ENCODE measurements at regions of chr9 and their contacts with region 1.

Region 1: GRCh38 chr9:71604197-71605063 is 163.9 kb downstream of the CEMIP2 start:
- DNase-seq: peak; percentile 65
- H3K4me3 ChIP-seq: no peak overlapping the region
- H3K27ac ChIP-seq: no peak overlapping the region
- H3K4me1 ChIP-seq: no peaks in the 10 kb centered on the region
- H3K27me3 ChIP-seq: no peaks in the 10 kb centered on the region
- CTCF ChIP-seq: peak; percentile 74 to 80
- POLR2A ChIP-seq: no peak

Region 2: GRCh38 chr9:71210326-71210725 is 394.1 kb before region 1 on chr9:
- CTCF ChIA-PET with region 1: no interaction called
- POLR2A ChIA-PET with region 1: no interaction called
- dilution Hi-C with region 1: no loop called
- intact Hi-C with region 1: no loop called
- DNase-seq: no peak
- H3K4me3 ChIP-seq: no peak overlapping the region
- H3K27ac ChIP-seq: no peak overlapping the region
- H3K4me1 ChIP-seq: no peaks in the 10 kb centered on the region
- H3K27me3 ChIP-seq: no peaks in the 10 kb centered on the region
- CTCF ChIP-seq: no peak
- POLR2A ChIP-seq: no peak

Region 3: GRCh38 chr9:71285191-71285656 is 319.2 kb before region 1 on chr9:
- CTCF ChIA-PET with region 1: no interaction called
- POLR2A ChIA-PET with region 1: no interaction called
- dilution Hi-C with region 1: no loop called
- intact Hi-C with region 1: loop called (anchors 5 kb)
- DNase-seq: peak; percentile 73
- H3K4me3 ChIP-seq: no peak overlapping the region
- H3K27ac ChIP-seq: no peak overlapping the region
- H3K4me1 ChIP-seq: no peaks in the 10 kb centered on the region
- H3K27me3 ChIP-seq: no peaks in the 10 kb centered on the region
- CTCF ChIP-seq: peak; percentile 70 to 73
- POLR2A ChIP-seq: no peak

Region 4: GRCh38 chr9:71614409-71615010 is 10.1 kb after region 1 on chr9:
- CTCF ChIA-PET with region 1: interaction called, 12 read pairs
- POLR2A ChIA-PET with region 1: no interaction called
- dilution Hi-C with region 1: no loop called
- intact Hi-C with region 1: no loop called
- DNase-seq: no peak
- H3K4me3 ChIP-seq: no peak overlapping the region
- H3K27ac ChIP-seq: no peak overlapping the region
- H3K4me1 ChIP-seq: no peaks in the 10 kb centered on the region
- H3K27me3 ChIP-seq: no peaks in the 10 kb centered on the region
- CTCF ChIP-seq: no peak
- POLR2A ChIP-seq: no peak

Region 5: GRCh38 chr9:71628247-71628646 is 23.8 kb after region 1 on chr9:
- CTCF ChIA-PET with region 1: interaction called, 11 read pairs
- POLR2A ChIA-PET with region 1: no interaction called
- dilution Hi-C with region 1: no loop called
- intact Hi-C with region 1: no loop called
- DNase-seq: no peak
- H3K4me3 ChIP-seq: no peak overlapping the region
- H3K27ac ChIP-seq: no peak overlapping the region
- H3K4me1 ChIP-seq: peaks cover 20% of the 10 kb centered on the region
- H3K27me3 ChIP-seq: no peaks in the 10 kb centered on the region
- CTCF ChIP-seq: no peak
- POLR2A ChIP-seq: no peak

Region 6: DNA sequence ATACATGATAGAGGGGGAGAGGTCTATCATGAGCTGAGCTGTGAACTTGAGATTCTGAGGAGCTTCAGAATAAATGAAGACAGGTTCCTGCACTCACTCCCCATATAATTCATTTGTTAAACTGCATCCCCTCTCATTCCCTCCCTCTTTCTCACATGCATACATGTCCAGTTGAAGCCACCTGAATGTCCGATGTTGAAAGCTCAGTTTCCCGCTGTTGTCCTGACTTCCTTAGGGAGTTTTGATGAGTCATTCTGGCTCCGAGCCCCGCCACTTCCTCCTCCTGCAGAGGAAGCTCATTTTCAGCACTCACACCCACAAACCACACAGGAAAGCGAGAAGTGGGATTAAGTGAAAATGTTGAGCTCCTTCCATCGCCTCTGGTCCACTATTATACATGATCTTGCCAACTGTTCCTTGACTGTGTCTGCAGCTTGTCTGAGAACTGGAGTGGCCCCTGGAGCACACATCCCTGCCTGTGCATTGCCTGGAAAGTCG is 42.7 kb after region 1 on chr9:
- CTCF ChIA-PET with region 1: interaction called, 19 read pairs
- POLR2A ChIA-PET with region 1: no interaction called
- dilution Hi-C with region 1: no loop called
- intact Hi-C with region 1: no loop called
- DNase-seq: peak; percentile 93
- H3K4me3 ChIP-seq: peak overlapping the region in 1 of 3 experiments; percentile 15
- H3K27ac ChIP-seq: peak overlapping the region; percentile 52
- H3K4me1 ChIP-seq: peaks cover 24% of the 10 kb centered on the region
- H3K27me3 ChIP-seq: no peaks in the 10 kb centered on the region
- CTCF ChIP-seq: no peak
- POLR2A ChIP-seq: no peak

Region 7: GRCh38 chr9:71758277-71758676 is 153.8 kb after region 1 on chr9:
- CTCF ChIA-PET with region 1: no interaction called
- POLR2A ChIA-PET with region 1: no interaction called
- dilution Hi-C with region 1: no loop called
- intact Hi-C with region 1: no loop called
- DNase-seq: no peak
- H3K4me3 ChIP-seq: no peak overlapping the region
- H3K27ac ChIP-seq: no peak overlapping the region
- H3K4me1 ChIP-seq: peaks cover 21% of the 10 kb centered on the region
- H3K27me3 ChIP-seq: no peaks in the 10 kb centered on the region
- CTCF ChIP-seq: no peak
- POLR2A ChIP-seq: no peak

Region 8: DNA sequence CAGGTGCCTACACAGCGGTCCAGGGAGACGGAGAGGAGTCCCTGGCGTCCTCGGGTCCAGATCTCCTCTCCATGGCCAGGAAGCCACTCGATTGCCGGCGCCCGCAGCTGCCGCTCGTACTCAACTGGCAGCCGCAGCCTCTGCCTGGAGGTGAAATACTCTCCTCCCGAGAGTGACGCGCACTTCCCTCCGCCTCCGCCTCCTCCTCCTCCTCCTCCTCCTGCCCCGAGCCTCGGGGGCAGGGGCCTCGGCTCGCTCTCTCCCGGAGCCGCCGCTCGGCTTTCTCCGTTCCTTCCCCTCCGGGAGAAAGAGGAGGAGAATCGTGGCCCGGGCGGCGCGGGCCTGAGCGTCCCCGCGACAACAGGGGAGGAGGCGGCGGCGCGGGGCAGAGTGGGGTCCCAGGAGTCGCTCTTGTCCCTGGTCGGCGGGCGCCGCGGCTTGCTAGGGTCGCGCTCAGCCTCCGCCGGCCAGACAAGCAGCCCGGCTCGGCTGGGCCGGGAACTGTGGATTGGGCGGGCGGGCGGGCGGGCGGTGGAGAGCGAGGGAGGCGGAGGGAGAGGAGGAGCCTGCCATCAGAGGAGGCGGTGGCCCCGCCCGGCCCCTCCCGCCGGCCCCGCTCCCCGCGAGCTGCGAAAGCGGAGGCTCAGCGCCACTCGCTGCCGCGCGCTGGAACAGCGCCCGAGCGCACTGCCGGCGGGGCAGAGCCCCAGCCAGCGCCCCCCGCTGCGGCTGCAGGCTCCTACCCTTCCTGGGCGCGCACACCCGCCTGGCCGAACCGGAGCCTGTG is 164.2 kb after region 1 on chr9 and contains the start of gene CEMIP2:
- CTCF ChIA-PET with region 1: interaction called, 25 read pairs
- POLR2A ChIA-PET with region 1: no interaction called
- dilution Hi-C with region 1: no loop called
- intact Hi-C with region 1: loop called (anchors 1 kb)
- DNase-seq: peak; percentile 89
- H3K4me3 ChIP-seq: peak within 1 kb of the TSS; percentile 97 to 98 (median 98)
- H3K27ac ChIP-seq: peak within 1 kb of the TSS; percentile 91
- H3K4me1 ChIP-seq: peaks cover 33% of the 10 kb centered on the region
- H3K27me3 ChIP-seq: no peaks in the 10 kb centered on the region
- CTCF ChIP-seq: peak; percentile 41 to 67
- POLR2A ChIP-seq: peak; percentile 98
- total RNA-seq, gene CEMIP2: 44.3 and 47.5 TPM in 2 replicates

Region 9: GRCh38 chr9:71819115-71819739 is 214.8 kb after region 1 on chr9:
- CTCF ChIA-PET with region 1: interaction called, 15 read pairs
- POLR2A ChIA-PET with region 1: no interaction called
- dilution Hi-C with region 1: no loop called
- intact Hi-C with region 1: loop called (anchors 1 kb)
- DNase-seq: peak; percentile 35
- H3K4me3 ChIP-seq: no peak overlapping the region
- H3K27ac ChIP-seq: no peak overlapping the region
- H3K4me1 ChIP-seq: peaks cover 4% of the 10 kb centered on the region
- H3K27me3 ChIP-seq: peaks cover 0 to 2% of the 10 kb centered on the region in 2 experiments
- CTCF ChIP-seq: peak; percentile 44 to 49
- POLR2A ChIP-seq: no peak